Right ventricle myocardium inferior (tissue), 1 donor: ENCODE measurements at regions of chr20 and their contacts with region 1.

Region 1: GRCh38 chr20:35092524-35093266 is at the start of gene TRPC4AP:
- DNase-seq: peak; percentile 98
- ATAC-seq: peak; percentile 97
- total RNA-seq, gene TRPC4AP: 35.3 TPM

Region 2: DNA sequence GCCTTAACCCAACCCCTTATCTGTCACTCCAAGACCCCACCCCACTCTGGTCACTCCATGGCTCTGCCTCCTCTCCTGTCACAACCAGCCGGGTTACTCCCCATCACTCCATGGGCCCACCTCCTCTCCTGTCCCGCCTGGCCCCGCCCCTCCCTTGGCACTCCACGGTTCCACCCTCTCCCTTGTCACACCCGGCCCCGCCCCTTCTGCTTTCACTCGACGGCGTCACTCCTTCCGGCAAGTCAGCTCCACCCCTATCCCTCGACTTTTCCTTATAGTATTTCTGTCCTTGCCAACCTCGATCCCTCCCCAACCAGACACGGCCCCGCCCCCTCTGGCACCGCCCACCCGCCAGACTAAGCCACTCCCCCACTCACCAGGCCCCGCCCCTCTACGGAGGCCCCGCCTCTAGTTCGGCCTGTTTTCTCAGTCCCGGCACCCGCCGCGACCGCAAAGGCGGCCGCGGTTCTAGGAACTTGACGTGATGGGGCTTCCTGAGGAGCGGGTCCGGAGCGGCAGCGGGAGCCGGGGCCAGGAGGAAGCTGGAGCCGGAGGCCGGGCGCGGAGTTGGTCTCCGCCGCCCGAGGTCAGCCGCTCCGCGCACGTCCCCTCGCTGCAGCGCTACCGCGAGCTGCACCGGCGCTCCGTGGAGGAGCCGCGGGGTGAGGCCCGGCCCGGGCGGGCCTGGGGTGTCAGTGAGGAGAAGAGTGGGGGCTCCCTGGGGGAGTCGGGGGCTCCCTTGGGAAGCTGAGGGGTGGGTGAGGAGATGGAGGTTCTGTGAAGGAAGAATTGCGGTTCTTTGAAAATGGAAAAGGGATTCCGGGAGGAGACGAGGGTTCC is 216.3 kb before region 1 on chr20 and contains the start of gene ACSS2:
- intact Hi-C with region 1: loop called (anchors 5 kb)
- DNase-seq: peak; percentile 100
- ATAC-seq: peak; percentile 91
- total RNA-seq, gene ACSS2: 149 TPM

Region 3: GRCh38 chr20:35021063-35021462 is 71.6 kb before region 1 on chr20:
- intact Hi-C with region 1: loop called (anchors 5 kb)
- DNase-seq: no peak
- ATAC-seq: no peak

Region 4: DNA sequence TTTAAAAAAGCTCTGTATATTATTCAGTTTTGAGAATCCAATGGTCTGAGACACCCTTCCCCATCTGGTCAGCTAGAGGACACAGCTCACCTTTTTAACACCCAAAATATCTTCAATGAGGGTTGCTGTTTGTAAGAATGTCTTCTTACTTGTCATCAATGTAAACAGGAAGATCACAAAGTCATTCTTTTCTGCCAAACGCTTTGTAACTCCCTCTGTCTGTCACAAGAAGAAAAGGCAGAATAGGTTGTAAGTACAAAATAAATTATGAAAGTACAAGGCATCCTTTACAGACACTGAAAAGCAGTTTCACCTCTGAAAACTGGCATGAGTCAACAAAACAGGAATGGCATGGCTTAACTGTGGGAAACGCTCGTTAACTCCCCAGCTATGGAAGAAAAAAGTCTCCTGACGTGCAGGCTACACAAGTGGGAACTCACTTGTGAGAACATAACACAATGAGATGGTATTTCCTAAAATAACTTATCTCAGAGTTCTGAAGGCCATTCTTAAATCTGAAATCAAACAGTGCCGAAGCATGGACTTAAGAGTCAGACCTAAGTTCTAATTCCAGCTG is 42.8 kb before region 1 on chr20:
- intact Hi-C with region 1: loop called (anchors 5 kb)
- DNase-seq: no peak
- ATAC-seq: peak; percentile 37

Region 5: GRCh38 chr20:35135867-35136586 is 43.3 kb after region 1 on chr20:
- intact Hi-C with region 1: loop called (anchors 5 kb)
- DNase-seq: no peak
- ATAC-seq: peak; percentile 75

Region 6: GRCh38 chr20:35207950-35208611 is 115.4 kb after region 1 on chr20:
- intact Hi-C with region 1: loop called (anchors 2 kb)
- DNase-seq: peak; percentile 76
- ATAC-seq: peak; percentile 92